ENCODE measurements at regions of chr6 and their contacts with region 1.

Region 1: DNA sequence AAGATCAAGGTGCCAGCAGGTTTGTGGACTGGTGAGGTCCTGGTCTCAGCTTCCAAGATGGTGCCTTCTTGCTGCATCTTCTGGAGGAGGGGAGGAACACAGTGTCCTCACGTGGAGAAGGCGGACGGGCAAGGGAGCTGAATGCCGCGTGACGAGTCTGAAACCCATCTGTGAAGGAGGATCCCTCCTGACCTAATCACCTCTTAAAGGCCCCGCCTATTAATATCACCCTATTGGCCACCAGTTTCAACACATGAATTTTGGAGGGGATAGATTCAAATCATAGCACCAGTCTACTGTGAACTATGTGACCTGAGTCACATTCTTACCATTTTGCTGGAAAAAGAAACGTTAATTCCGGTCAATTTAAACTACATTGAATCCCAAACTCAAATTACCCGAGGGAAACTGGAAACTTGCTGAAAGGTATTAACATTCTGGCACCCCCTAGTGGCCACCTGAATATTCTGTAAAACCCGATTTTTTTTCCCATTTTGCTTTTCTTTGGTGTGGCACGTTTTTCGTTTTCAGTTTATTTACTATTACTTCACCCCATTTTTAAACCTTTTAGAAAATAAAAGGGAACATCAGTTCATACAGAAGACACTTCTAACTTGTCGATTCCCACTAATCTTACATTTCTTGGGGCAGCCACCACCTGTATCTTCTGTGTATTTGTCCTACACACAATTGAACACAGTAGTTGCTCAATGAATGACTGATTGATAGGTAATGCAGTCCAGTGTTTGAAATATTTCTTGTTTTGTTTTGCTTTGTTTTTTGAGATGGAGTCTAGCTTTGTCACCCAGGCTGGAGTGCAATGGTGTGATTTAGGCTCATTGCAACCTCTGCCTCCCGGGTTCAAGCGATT is 17.9 kb upstream of the CCDC170 start:
- DNase-seq: peak in 7 of 9 donors; percentile 15 to 58 (median 47)
- ATAC-seq: peak; percentile 67
- H3K4me3 ChIP-seq: no peak overlapping the region
- H3K4me3 Mint-ChIP-seq: peak overlapping the region in 5 of 10 donors; percentile 14 to 54 (median 33)
- H3K27ac ChIP-seq: no peak overlapping the region
- H3K27ac Mint-ChIP-seq: peak overlapping the region in 2 of 9 donors; percentile 29 to 32
- H3K4me1 ChIP-seq: peaks cover 0 to 4% of the 10 kb centered on the region in 2 donors
- H3K4me1 Mint-ChIP-seq: peaks cover 0 to 9% (median 5%) of the 10 kb centered on the region in 7 donors
- H3K27me3 ChIP-seq: no peaks in the 10 kb centered on the region
- H3K27me3 Mint-ChIP-seq: no peaks in the 10 kb centered on the region

Region 2: GRCh38 chr6:151352410-151353396 is 123.2 kb before region 1 on chr6:
- CTCF ChIA-PET with region 1: interaction called, 4 read pairs
- POLR2A ChIA-PET with region 1: no interaction called
- intact Hi-C with region 1: loop called in 1 of 2 experiments (anchors 1 kb)
- DNase-seq: no peak
- ATAC-seq: peak; percentile 40
- H3K4me3 ChIP-seq: no peak overlapping the region
- H3K4me3 Mint-ChIP-seq: no peak overlapping the region
- H3K27ac ChIP-seq: no peak overlapping the region
- H3K27ac Mint-ChIP-seq: no peak overlapping the region
- H3K4me1 ChIP-seq: no peaks in the 10 kb centered on the region
- H3K4me1 Mint-ChIP-seq: peaks cover 0 to 6% (median 2%) of the 10 kb centered on the region in 7 donors
- H3K27me3 ChIP-seq: no peaks in the 10 kb centered on the region
- H3K27me3 Mint-ChIP-seq: no peaks in the 10 kb centered on the region

Region 3: DNA sequence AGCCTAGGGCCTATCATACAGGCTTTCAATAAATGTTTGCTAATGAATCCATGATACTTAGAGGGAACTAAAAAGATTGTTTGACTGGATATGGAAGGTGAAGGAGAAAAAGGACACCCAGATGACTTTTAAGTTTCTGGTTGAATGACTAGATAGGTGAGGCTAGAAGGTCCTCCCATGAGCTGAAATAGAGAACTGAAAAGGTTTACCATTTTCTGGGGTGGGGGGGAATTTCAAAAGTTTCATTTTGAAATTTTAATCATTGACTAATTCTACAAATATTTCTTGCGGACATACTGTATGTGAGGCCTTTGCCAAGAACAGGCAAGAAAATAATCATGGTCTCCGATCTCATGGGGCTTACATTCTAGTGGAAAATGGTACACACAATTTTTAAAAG is 66.6 kb before region 1 on chr6:
- CTCF ChIA-PET with region 1: interaction called, 6 read pairs
- POLR2A ChIA-PET with region 1: interaction called, 3 read pairs
- intact Hi-C with region 1: loop called (anchors 1 kb)
- DNase-seq: no peak
- ATAC-seq: no peak
- H3K4me3 ChIP-seq: no peak overlapping the region
- H3K4me3 Mint-ChIP-seq: no peak overlapping the region
- H3K27ac ChIP-seq: no peak overlapping the region
- H3K27ac Mint-ChIP-seq: peak overlapping the region in 7 of 9 donors; percentile 1 to 70 (median 37)
- H3K4me1 ChIP-seq: peaks cover 12 to 14% of the 10 kb centered on the region in 2 donors
- H3K4me1 Mint-ChIP-seq: peaks cover 20 to 38% (median 32%) of the 10 kb centered on the region in 7 donors
- H3K27me3 ChIP-seq: no peaks in the 10 kb centered on the region
- H3K27me3 Mint-ChIP-seq: no peaks in the 10 kb centered on the region

Region 4: GRCh38 chr6:151440930-151441329 is 35.0 kb before region 1 on chr6:
- CTCF ChIA-PET with region 1: interaction called, 20 read pairs
- POLR2A ChIA-PET with region 1: no interaction called
- intact Hi-C with region 1: loop called (anchors 1 kb)
- DNase-seq: peak in 7 of 9 donors; percentile 10 to 46 (median 33)
- ATAC-seq: peak; percentile 47
- H3K4me3 ChIP-seq: no peak overlapping the region
- H3K4me3 Mint-ChIP-seq: no peak overlapping the region
- H3K27ac ChIP-seq: no peak overlapping the region
- H3K27ac Mint-ChIP-seq: peak overlapping the region in 3 of 9 donors; percentile 2 to 23 (median 20)
- H3K4me1 ChIP-seq: peaks cover 6 to 8% of the 10 kb centered on the region in 2 donors
- H3K4me1 Mint-ChIP-seq: peaks cover 16 to 62% (median 47%) of the 10 kb centered on the region in 7 donors
- H3K27me3 ChIP-seq: no peaks in the 10 kb centered on the region
- H3K27me3 Mint-ChIP-seq: no peaks in the 10 kb centered on the region